Activated CD4-positive, alpha-beta T cell treated with anti-CD3 and anti-CD28 coated beads, Interleukin-2, amount 10 ng/mL, durations not matched to agents 7 days and 5 days (primary cell): ENCODE measurements at regions of chr16 and their contacts with region 1.

Region 1: GRCh38 chr16:30046184-30046583 is 15.1 kb upstream of the TLCD3B start:
- DNase-seq: no peak
- H3K4me3 Mint-ChIP-seq: no peak overlapping the region
- H3K27ac Mint-ChIP-seq: no peak overlapping the region
- H3K4me1 Mint-ChIP-seq: peaks cover 12% of the 10 kb centered on the region
- H3K27me3 Mint-ChIP-seq: peaks cover 3% of the 10 kb centered on the region

Region 2: DNA sequence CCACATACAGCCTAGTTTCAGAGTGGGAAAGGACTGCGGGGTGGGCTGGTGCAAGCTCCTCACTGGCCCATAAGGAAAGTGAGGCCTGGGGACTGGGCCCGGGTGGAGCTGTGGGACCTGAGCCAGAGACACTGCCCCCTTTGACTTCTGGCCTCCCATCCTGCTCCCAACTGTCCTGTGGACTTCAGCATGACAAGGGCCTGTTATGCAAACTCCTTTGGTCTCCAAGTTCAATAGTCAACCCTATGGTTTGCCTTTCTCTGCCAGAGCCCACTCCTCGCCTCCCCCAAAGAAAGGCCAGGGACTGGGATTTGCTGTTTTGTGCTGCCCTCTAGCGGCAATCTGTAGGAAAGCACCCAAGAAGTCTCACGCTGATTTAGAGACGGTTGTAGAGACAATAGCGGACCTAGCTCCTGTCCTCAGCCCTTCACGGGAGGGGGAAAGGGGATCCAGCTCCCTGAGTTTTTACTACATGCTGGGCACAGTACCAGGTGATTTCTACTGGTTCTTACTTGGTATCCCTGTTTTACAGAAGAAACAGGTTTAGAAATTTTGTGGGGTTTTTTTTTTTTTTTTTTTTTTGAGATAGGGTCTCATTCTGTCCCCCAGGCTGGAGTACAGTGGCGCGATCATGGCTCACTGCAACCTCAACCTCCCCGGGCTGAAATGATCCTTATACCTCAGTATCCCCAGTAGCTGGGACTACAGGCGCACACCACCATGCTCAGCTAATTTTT is 13.9 kb before region 1 on chr16:
- CTCF ChIA-PET with region 1: interaction called, 10 read pairs
- POLR2A ChIA-PET with region 1: no interaction called
- DNase-seq: peak; percentile 76
- H3K4me3 Mint-ChIP-seq: no peak overlapping the region
- H3K27ac Mint-ChIP-seq: no peak overlapping the region
- H3K4me1 Mint-ChIP-seq: peaks cover 20% of the 10 kb centered on the region
- H3K27me3 Mint-ChIP-seq: peaks cover 44% of the 10 kb centered on the region

Region 3: GRCh38 chr16:30131869-30132475 is 85.8 kb after region 1 on chr16:
- CTCF ChIA-PET with region 1: no interaction called
- POLR2A ChIA-PET with region 1: no interaction called
- DNase-seq: no peak
- H3K4me3 Mint-ChIP-seq: no peak overlapping the region
- H3K27ac Mint-ChIP-seq: no peak overlapping the region
- H3K4me1 Mint-ChIP-seq: no peaks in the 10 kb centered on the region
- H3K27me3 Mint-ChIP-seq: no peaks in the 10 kb centered on the region

Region 4: GRCh38 chr16:30180741-30181140 is 134.6 kb after region 1 on chr16:
- CTCF ChIA-PET with region 1: no interaction called
- POLR2A ChIA-PET with region 1: no interaction called
- DNase-seq: no peak
- H3K4me3 Mint-ChIP-seq: no peak overlapping the region
- H3K27ac Mint-ChIP-seq: no peak overlapping the region
- H3K4me1 Mint-ChIP-seq: peaks cover 10% of the 10 kb centered on the region
- H3K27me3 Mint-ChIP-seq: no peaks in the 10 kb centered on the region